ENCODE measurements at regions of chr5 and their contacts with region 1.

Region 1: DNA sequence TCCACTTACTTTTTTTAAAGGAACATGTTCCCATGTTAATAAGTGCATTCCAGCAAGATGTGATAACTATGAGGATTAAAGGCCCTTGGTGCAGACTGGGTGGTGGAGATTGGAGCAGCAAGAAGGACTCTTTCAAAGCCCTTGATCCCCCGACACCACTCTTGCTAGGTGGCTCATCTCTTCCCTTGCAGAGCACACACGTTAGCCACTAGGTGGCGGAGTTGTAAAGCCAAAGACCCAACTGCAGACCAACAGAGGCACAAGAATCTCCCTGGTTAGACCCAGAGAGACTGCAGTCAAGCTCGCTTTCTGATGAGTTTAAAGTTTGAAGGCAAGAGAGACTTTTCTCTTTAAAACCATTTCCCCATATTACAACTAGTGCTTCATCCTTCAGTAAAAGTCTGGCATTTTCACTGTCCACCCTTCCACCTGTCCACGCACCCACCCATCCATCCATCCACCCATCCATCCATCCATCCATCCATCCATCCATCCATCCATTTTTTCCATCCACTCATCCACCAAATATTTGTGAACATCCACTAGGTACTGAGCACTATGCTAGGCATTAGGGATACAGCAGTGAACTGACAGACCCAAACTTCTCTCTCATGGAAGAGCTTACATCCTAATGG is 226.9 kb downstream of the MSX2 start:
- DNase-seq: peak in 2 of 3 donors; percentile 49 to 63
- ATAC-seq: peak; percentile 84 to 87
- H3K4me3 ChIP-seq: no peak overlapping the region
- H3K27ac ChIP-seq: no peak overlapping the region
- H3K4me1 ChIP-seq: no peaks in the 10 kb centered on the region
- H3K27me3 ChIP-seq: no peaks in the 10 kb centered on the region

Region 2: GRCh38 chr5:175070283-175070682 is 119.0 kb after region 1 on chr5:
- intact Hi-C with region 1: no loop called
- DNase-seq: no peak
- ATAC-seq: no peak
- H3K4me3 ChIP-seq: no peak overlapping the region
- H3K27ac ChIP-seq: no peak overlapping the region
- H3K4me1 ChIP-seq: no peaks in the 10 kb centered on the region
- H3K27me3 ChIP-seq: no peaks in the 10 kb centered on the region

Region 3: GRCh38 chr5:175133185-175133584 is 181.9 kb after region 1 on chr5:
- intact Hi-C with region 1: no loop called
- DNase-seq: no peak
- ATAC-seq: no peak
- H3K4me3 ChIP-seq: no peak overlapping the region
- H3K27ac ChIP-seq: no peak overlapping the region
- H3K4me1 ChIP-seq: no peaks in the 10 kb centered on the region
- H3K27me3 ChIP-seq: no peaks in the 10 kb centered on the region

Region 4: GRCh38 chr5:175202451-175203068 is 251.3 kb after region 1 on chr5:
- intact Hi-C with region 1: no loop called
- DNase-seq: no peak
- ATAC-seq: no peak
- H3K4me3 ChIP-seq: no peak overlapping the region
- H3K27ac ChIP-seq: no peak overlapping the region
- H3K4me1 ChIP-seq: no peaks in the 10 kb centered on the region
- H3K27me3 ChIP-seq: no peaks in the 10 kb centered on the region

Region 5: DNA sequence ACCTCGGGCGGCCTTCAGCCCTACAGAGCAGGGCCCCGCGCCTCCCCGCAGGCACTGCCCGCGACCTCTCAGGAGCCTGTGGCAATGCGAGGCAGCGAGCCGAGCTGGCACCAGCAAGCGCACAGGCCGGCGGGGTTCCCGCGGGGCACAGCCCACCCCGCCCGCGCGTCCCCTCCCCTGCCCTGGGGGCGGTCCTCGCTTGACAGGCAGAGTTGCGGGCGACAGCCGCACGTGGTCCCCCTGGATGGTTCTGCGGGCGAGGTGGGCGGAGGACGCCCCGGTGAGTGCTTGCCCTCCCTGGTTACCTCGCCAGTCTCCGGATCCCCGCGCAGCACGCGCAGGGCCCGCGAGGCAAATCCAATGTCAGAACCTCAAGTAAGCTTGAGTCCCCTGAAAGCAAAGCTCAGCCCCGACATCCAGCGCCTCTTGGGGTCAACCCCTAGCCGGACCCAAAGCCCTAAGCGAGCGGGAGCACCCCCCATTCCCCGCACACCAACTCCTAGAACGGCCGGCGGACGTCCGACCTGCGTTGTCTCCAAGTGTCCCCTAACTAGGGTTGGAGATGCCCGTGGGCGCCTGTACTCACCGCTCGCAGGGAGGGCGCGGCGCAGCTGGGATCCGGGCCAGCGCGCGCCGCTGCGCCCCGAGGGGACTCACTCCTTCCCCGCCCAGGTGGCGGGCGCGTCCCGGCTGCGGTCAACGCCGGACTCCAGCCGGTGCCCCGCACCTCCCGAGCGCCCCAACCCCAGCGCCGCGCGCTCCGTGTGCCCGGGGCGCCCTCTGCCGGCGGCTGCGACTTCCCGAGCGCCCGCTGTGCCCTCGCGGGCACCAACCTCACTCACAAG is 493.0 kb after region 1 on chr5 and contains the start of gene DRD1:
- intact Hi-C with region 1: loop called in 3 of 4 experiments (anchors 5 kb)
- DNase-seq: peak; percentile 21 to 72 (median 65)
- ATAC-seq: peak; percentile 67 to 73
- H3K4me3 ChIP-seq: peak within 1 kb of the TSS; percentile 7
- H3K27ac ChIP-seq: no peak within 1 kb of the TSS
- H3K4me1 ChIP-seq: no peaks in the 10 kb centered on the region
- H3K27me3 ChIP-seq: peaks cover 3% of the 10 kb centered on the region
- total RNA-seq, gene DRD1: not detected

Region 6: DNA sequence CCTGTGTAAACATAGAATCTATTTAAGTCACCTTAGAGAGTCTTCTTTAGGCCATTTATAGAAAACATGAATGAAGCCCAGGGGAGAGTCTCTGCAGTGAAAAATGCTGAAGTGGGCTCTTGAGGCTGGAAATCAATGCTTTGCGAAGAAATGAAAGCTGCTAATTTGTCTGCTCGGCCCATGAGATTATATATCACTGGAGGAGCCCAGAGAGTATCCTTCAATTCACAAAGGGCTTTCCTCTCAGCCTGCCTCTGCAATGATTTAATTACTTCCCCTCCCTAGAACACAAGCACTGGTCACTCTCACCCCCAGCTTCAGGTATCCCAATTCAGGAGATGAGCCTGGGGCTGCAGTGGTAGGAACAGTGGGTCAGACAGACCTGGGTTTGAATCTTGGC is 500.9 kb after region 1 on chr5:
- intact Hi-C with region 1: loop called in 2 of 4 experiments (anchors 5 kb)
- DNase-seq: no peak
- ATAC-seq: no peak
- H3K4me3 ChIP-seq: no peak overlapping the region
- H3K27ac ChIP-seq: no peak overlapping the region
- H3K4me1 ChIP-seq: no peaks in the 10 kb centered on the region
- H3K27me3 ChIP-seq: no peaks in the 10 kb centered on the region

Region 7: DNA sequence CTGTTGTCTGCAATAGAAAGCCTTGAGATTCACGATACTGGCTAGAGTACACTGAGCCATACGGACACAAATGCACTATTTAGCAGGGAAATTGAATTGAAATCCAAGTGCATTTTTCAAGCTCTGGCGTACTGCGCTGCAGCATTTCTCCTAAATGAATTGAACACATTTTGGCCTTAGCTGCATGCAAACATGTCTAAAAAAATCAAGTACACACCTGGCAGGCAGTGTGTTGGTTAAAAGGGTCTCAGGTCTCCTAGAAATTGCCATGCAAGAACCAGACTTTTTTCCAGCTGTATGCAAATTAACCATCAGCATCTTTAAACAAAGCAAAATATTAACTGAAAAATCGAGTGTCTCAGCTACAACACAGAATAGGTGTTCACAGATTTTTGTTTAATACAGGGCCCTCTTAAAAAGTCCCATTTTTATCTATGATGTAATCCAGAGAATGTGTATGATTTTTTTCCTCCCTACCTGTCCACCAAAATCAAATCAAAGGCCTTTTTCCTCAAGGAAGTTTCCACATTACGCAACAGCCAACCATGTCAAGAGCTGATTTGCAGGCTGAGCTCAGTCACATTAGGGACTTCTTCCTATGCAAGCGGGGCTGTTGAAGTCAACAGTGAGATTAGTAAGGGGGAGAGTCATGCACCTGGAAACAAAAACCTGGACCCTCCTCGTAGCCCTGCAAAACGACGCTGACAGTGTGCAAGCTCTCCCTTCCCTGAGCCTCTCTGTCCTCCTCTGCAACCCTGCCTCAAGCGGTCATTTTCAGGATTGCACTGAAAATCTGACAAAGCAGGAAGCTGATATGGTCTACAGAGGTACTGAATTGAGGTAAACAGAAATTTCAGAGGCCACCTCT is 513.0 kb after region 1 on chr5:
- intact Hi-C with region 1: loop called in 1 of 4 experiments (anchors 5 kb)
- DNase-seq: peak in 1 of 3 donors; percentile 19
- ATAC-seq: peak; percentile 60 to 75
- H3K4me3 ChIP-seq: no peak overlapping the region
- H3K27ac ChIP-seq: no peak overlapping the region
- H3K4me1 ChIP-seq: peaks cover 3% of the 10 kb centered on the region
- H3K27me3 ChIP-seq: no peaks in the 10 kb centered on the region